ENCODE measurements at regions of chr4 and their contacts with region 1.

Region 1: GRCh38 chr4:141133146-141133998 is at the start of gene RNF150:
- DNase-seq: peak; percentile 71
- H3K4me3 ChIP-seq: peak within 1 kb of the TSS; percentile 97
- H3K27me3 ChIP-seq: no peaks in the 10 kb centered on the region
- CTCF ChIP-seq: peak; percentile 85
- polyA plus RNA-seq, gene RNF150: 39.4 and 47.7 TPM in 2 replicates

Region 2: GRCh38 chr4:140602714-140603113 is 530.7 kb before region 1 on chr4:
- CTCF ChIA-PET with region 1: no interaction called
- POLR2A ChIA-PET with region 1: no interaction called
- DNase-seq: no peak
- H3K4me3 ChIP-seq: no peak overlapping the region
- H3K27me3 ChIP-seq: peaks cover 6% of the 10 kb centered on the region
- CTCF ChIP-seq: no peak

Region 3: DNA sequence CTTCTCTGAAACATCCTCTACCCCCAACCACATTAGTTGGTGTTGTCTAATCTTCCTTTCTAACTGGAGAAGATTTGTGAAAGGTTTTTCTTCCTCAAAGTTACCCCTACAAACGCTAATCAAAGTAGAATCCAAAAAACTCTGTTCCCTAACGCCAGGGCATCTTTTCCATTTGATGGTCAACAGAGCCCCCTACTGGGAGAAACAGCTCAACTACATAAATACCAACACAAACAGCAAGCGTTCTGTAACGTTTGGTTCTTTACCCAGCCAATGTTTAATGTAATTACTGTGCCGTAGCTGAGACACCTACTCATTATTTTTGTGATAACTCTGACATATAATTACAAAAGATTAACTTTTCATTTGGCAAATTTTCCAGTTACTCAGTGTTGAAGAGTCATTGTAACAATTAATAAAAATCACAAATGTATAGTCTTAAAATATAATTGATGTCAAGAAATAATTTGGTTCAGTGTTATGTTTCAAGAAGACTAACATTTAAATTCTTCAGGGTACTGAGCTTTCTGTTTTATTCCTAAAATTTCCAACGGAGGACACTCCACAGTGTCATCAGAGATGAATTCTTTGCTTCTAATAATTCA is 282.2 kb before region 1 on chr4:
- CTCF ChIA-PET with region 1: interaction called, 14 read pairs
- POLR2A ChIA-PET with region 1: no interaction called
- DNase-seq: no peak
- H3K4me3 ChIP-seq: no peak overlapping the region
- H3K27me3 ChIP-seq: peaks cover 1% of the 10 kb centered on the region; the same call in 1 of the 2 replicates
- CTCF ChIP-seq: peak; percentile 72

Region 4: GRCh38 chr4:140876615-140877364 is 256.6 kb before region 1 on chr4:
- CTCF ChIA-PET with region 1: interaction called, 16 read pairs
- POLR2A ChIA-PET with region 1: interaction called, 12 read pairs
- DNase-seq: no peak
- H3K4me3 ChIP-seq: no peak overlapping the region
- H3K27me3 ChIP-seq: no peaks in the 10 kb centered on the region
- CTCF ChIP-seq: no peak

Region 5: GRCh38 chr4:140996766-140997165 is 136.6 kb before region 1 on chr4:
- CTCF ChIA-PET with region 1: interaction called, 34 read pairs
- POLR2A ChIA-PET with region 1: no interaction called
- DNase-seq: peak; percentile 39
- H3K4me3 ChIP-seq: no peak overlapping the region
- H3K27me3 ChIP-seq: no peaks in the 10 kb centered on the region
- CTCF ChIP-seq: peak; percentile 45; the same call in 1 of the 2 replicates

Region 6: GRCh38 chr4:141046255-141046654 is 87.1 kb before region 1 on chr4:
- CTCF ChIA-PET with region 1: interaction called, 13 read pairs
- POLR2A ChIA-PET with region 1: no interaction called
- DNase-seq: peak; percentile 96
- H3K4me3 ChIP-seq: no peak overlapping the region
- H3K27me3 ChIP-seq: no peaks in the 10 kb centered on the region
- CTCF ChIP-seq: no peak